ENCODE measurements at regions of chr1 and their contacts with region 1.

Region 1: GRCh38 chr1:155934097-155934935 is at the start of gene KHDC4:
- DNase-seq: peak; percentile 98
- ATAC-seq: peak; percentile 94
- H3K4me3 Mint-ChIP-seq: no peak within 1 kb of the TSS
- H3K27ac Mint-ChIP-seq: no peak within 1 kb of the TSS
- H3K4me1 Mint-ChIP-seq: peaks cover 44% of the 10 kb centered on the region
- H3K27me3 Mint-ChIP-seq: no peaks in the 10 kb centered on the region
- total RNA-seq, gene KHDC4: 64.5 to 68.9 TPM

Region 2: DNA sequence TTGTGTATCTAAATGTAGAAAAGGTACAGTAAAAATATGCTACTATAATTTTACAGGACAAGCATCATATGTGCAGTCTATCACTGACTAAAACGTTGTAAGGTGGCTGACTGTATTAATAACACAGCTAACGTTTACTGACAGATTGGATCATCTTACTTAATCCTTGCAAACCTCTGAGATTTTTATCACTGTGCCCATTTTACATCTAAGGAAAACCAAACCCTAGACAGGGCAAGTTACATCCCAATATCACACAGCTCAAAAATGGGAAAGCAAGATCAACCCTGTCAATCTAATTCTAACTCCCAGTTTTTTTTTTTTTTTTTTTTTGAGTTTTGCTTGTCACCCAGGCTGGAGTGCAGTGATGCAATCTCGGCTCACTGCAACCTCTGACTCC is 15.7 kb before region 1 on chr1:
- CTCF ChIA-PET with region 1: interaction called, 8 read pairs
- POLR2A ChIA-PET with region 1: interaction called, 16 read pairs
- DNase-seq: no peak
- ATAC-seq: no peak
- H3K4me3 Mint-ChIP-seq: no peak overlapping the region
- H3K27ac Mint-ChIP-seq: no peak overlapping the region
- H3K4me1 Mint-ChIP-seq: peaks cover 4% of the 10 kb centered on the region
- H3K27me3 Mint-ChIP-seq: no peaks in the 10 kb centered on the region

Region 3: DNA sequence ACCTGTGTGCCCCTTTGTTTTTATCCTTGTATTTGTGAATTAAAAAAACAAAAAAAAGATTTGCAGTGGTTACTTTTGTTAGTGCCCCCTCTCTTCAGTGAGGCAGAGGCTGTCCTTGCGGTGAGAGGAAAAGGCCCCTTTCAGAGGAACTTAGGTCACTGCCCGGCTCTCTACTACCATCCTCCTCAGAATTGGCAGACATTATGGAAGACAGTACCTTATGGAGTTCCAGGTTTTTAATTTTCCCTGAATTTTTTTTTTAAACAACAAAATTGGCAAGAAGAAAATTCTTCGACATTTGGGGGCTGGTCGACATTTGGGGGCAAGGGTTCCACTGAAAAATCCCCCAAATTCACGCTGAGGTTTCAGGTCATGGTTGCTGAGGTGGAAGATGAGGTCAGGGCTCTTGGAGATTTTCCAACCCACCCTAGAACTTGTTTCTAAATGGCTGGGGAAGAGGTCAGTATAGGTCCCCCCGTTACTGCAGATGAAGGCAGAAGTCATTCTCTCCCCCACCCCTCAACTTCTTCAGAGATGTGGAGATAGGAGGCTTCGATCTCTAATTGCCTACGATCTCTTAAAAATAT is 12.4 kb after region 1 on chr1:
- CTCF ChIA-PET with region 1: interaction called, 16 read pairs
- POLR2A ChIA-PET with region 1: interaction called, 39 read pairs
- DNase-seq: no peak
- ATAC-seq: no peak
- H3K4me3 Mint-ChIP-seq: peak overlapping the region; percentile 46
- H3K27ac Mint-ChIP-seq: peak overlapping the region; percentile 87
- H3K4me1 Mint-ChIP-seq: peaks cover 53% of the 10 kb centered on the region
- H3K27me3 Mint-ChIP-seq: no peaks in the 10 kb centered on the region

Region 4: GRCh38 chr1:155957411-155957915 is 23.1 kb after region 1 on chr1:
- CTCF ChIA-PET with region 1: interaction called, 25 read pairs
- POLR2A ChIA-PET with region 1: interaction called, 3 read pairs
- DNase-seq: no peak
- ATAC-seq: no peak
- H3K4me3 Mint-ChIP-seq: no peak overlapping the region
- H3K27ac Mint-ChIP-seq: no peak overlapping the region
- H3K4me1 Mint-ChIP-seq: peaks cover 18% of the 10 kb centered on the region
- H3K27me3 Mint-ChIP-seq: no peaks in the 10 kb centered on the region

Region 5: DNA sequence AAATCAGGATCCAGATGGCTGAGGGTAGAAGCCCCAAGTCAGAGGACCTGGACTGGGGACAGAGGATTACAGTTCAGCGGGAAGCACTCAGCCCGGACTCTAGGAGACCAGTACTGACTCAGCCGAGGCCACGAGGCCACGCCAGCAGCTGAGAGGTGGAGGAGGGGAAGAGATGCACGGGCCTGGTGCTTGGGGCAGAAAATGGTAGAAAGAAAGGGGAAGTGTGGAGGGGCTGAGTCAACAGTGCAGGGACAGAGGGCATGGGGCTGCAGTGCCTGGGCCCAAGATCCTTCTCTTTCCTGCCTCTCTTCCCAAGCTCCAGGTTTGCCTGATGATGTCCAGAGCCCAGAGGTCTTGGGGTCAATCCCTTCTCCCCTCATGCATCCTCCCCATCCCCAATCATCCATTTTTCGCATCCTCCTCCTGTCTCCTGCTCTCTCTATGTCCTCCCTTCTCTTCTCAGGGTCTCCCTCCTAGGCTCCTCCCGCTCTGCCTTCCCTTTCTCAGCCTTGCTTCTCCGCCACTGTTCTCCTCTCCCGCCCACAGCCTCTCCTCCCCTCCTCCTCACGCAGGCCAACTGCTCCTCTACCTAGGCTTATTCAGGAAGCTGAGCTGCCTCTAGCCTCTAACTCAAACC is 36.3 kb after region 1 on chr1:
- CTCF ChIA-PET with region 1: interaction called, 113 read pairs
- POLR2A ChIA-PET with region 1: interaction called, 8 read pairs
- DNase-seq: peak; percentile 38
- ATAC-seq: peak; percentile 34
- H3K4me3 Mint-ChIP-seq: peak overlapping the region; percentile 23
- H3K27ac Mint-ChIP-seq: peak overlapping the region; percentile 86
- H3K4me1 Mint-ChIP-seq: peaks cover 98% of the 10 kb centered on the region
- H3K27me3 Mint-ChIP-seq: no peaks in the 10 kb centered on the region

Region 6: DNA sequence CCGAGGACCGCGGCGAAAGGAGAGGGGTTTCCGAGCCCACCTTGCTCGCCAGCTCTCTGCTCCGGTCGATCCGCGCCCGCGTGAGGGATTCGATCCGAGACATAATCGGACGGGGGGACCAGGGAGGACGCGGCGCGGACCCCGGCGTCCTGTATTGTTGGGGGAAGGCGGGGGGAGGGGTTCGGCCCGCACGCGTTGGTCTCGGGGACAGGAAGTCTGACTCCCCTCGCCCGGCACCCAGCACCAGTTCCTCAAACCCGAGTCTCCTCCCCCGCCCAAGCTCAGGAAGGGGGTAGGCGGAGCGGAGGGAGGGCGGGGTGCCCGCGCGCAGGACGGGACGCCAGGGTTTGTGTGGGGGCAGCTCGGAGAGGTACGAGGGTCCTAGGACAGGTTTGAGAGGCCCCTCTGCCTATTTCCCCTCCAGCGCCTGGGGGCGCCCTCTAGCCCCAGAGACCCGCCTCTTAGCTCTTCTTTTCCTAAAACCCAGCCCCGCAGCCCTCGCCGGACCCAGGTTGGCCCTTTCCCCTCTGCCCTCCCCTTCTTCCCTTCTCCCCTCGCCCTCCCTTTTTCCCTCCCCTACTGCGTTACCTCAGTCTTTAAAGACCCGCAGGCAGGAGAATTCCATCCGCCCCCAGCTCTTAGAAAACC is 44.1 kb after region 1 on chr1 and contains the start of gene ARHGEF2:
- CTCF ChIA-PET with region 1: interaction called, 113 read pairs
- POLR2A ChIA-PET with region 1: interaction called, 34 read pairs
- DNase-seq: peak; percentile 87
- ATAC-seq: peak; percentile 70
- H3K4me3 Mint-ChIP-seq: peak within 1 kb of the TSS; percentile 96
- H3K27ac Mint-ChIP-seq: peak within 1 kb of the TSS; percentile 93
- H3K4me1 Mint-ChIP-seq: peaks cover 74% of the 10 kb centered on the region
- H3K27me3 Mint-ChIP-seq: no peaks in the 10 kb centered on the region
- total RNA-seq, gene ARHGEF2: 142 to 147 TPM

Region 7: GRCh38 chr1:155996166-155996565 is 61.9 kb after region 1 on chr1:
- CTCF ChIA-PET with region 1: interaction called, 144 read pairs
- POLR2A ChIA-PET with region 1: interaction called, 8 read pairs
- DNase-seq: no peak
- ATAC-seq: no peak
- H3K4me3 Mint-ChIP-seq: no peak overlapping the region
- H3K27ac Mint-ChIP-seq: no peak overlapping the region
- H3K4me1 Mint-ChIP-seq: peaks cover 8% of the 10 kb centered on the region
- H3K27me3 Mint-ChIP-seq: no peaks in the 10 kb centered on the region

Region 8: DNA sequence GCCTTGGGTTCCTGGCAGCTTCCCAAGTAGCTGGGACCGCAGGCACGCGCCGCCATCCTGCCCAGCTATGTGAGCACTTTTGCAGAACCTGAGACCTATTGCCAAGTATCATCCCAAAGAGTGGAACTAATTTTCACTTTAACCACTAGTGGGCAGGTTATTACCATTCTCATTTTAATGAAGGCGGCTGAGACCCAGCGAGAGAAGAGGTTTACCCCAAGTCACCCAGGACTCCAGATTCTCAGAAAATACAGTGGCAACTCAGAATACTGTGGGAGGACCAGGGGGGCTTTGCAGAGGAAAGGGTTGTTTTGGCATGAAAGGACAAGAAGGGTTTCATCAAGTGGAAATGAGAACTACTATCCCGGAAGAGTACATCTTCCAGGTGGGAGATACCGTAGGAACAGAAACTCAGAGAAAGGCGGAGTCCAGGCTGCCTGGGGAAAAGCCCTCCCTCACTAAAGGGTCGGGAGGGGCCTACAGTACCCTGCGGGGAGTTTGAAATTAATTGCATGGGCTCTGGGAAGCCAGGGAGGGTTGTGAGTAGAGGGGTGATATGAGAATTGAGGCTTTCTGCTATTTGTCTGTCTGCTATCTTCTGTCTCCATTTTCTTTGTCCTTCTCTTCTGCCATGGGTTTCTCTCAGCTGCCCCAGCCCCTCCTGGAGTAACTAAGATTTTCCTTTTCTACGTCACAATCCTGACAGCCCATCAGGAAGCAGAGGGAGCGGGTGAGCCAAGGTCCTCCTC is 211.9 kb after region 1 on chr1:
- CTCF ChIA-PET with region 1: no interaction called
- POLR2A ChIA-PET with region 1: no interaction called
- DNase-seq: peak; percentile 72
- ATAC-seq: peak; percentile 80
- H3K4me3 Mint-ChIP-seq: peak overlapping the region; percentile 63
- H3K27ac Mint-ChIP-seq: peak overlapping the region; percentile 85
- H3K4me1 Mint-ChIP-seq: peaks cover 47% of the 10 kb centered on the region
- H3K27me3 Mint-ChIP-seq: no peaks in the 10 kb centered on the region

Measured in activated CD8-positive, alpha-beta T cell treated with anti-CD3 and anti-CD28 coated beads, Interleukin-2, amount 10 ng/mL, durations not matched to agents 7 days and 5 days (primary cell).